Activated B cell treated with CpG ODN at 0.5 μM for 24 hours (primary cell): ENCODE measurements at regions of chr1 and their contacts with region 1.

Region 1: GRCh38 chr1:16366722-16367257 is at the start of gene SZRD1:
- DNase-seq: peak; percentile 84
- ATAC-seq: peak; percentile 83
- H3K4me3 Mint-ChIP-seq: peak within 1 kb of the TSS; percentile 99
- H3K27ac Mint-ChIP-seq: peak within 1 kb of the TSS; percentile 99
- H3K4me1 Mint-ChIP-seq: peaks cover 38% of the 10 kb centered on the region
- H3K27me3 Mint-ChIP-seq: no peaks in the 10 kb centered on the region
- CTCF ChIP-seq: no peak
- total RNA-seq, gene SZRD1: 184 and 190 TPM in 2 replicates

Region 2: DNA sequence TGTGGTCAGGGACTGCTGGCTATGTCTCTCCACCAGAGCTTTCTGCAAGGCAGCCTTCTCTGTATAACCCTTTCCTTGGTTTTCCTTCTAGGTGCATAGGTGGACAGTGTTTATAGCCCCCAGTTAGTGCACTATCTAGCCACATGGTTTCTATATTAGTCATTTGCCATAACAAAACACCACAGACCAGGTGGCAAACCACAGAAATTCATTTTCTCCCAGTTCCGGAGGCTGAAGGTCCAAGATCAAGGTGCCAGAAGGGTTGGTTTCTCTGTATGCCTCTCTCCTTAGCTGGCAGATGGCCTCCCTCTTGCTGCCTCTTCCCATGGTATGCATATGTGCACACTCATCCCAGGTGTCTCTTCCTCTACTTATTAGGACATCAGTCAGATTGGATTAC is 1661.9 kb before region 1 on chr1:
- CTCF ChIA-PET with region 1: no interaction called
- POLR2A ChIA-PET with region 1: no interaction called
- intact Hi-C with region 1: no loop called
- DNase-seq: no peak
- ATAC-seq: no peak
- H3K4me3 Mint-ChIP-seq: no peak overlapping the region
- H3K27ac Mint-ChIP-seq: no peak overlapping the region
- H3K4me1 Mint-ChIP-seq: no peaks in the 10 kb centered on the region
- H3K27me3 Mint-ChIP-seq: no peaks in the 10 kb centered on the region
- CTCF ChIP-seq: no peak

Region 3: GRCh38 chr1:15835741-15836510 is 530.9 kb before region 1 on chr1:
- CTCF ChIA-PET with region 1: no interaction called
- POLR2A ChIA-PET with region 1: interaction called, 16 read pairs
- intact Hi-C with region 1: loop called (anchors 5 kb)
- DNase-seq: peak; percentile 96
- ATAC-seq: peak; percentile 49
- H3K4me3 Mint-ChIP-seq: peak overlapping the region; percentile 90
- H3K27ac Mint-ChIP-seq: peak overlapping the region; percentile 98
- H3K4me1 Mint-ChIP-seq: peaks cover 45% of the 10 kb centered on the region
- H3K27me3 Mint-ChIP-seq: no peaks in the 10 kb centered on the region
- CTCF ChIP-seq: no peak

Region 4: GRCh38 chr1:16351994-16352841 is 14.6 kb before region 1 on chr1 and contains the start of gene FBXO42:
- CTCF ChIA-PET with region 1: interaction called, 13 read pairs
- POLR2A ChIA-PET with region 1: interaction called, 24 read pairs
- intact Hi-C with region 1: loop called (anchors 1 kb)
- DNase-seq: peak; percentile 94
- ATAC-seq: peak; percentile 91
- H3K4me3 Mint-ChIP-seq: peak within 1 kb of the TSS; percentile 88
- H3K27ac Mint-ChIP-seq: peak within 1 kb of the TSS; percentile 88
- H3K4me1 Mint-ChIP-seq: peaks cover 38% of the 10 kb centered on the region
- H3K27me3 Mint-ChIP-seq: no peaks in the 10 kb centered on the region
- CTCF ChIP-seq: no peak
- total RNA-seq, gene FBXO42: 19.0 and 20.5 TPM in 2 replicates

Region 5: DNA sequence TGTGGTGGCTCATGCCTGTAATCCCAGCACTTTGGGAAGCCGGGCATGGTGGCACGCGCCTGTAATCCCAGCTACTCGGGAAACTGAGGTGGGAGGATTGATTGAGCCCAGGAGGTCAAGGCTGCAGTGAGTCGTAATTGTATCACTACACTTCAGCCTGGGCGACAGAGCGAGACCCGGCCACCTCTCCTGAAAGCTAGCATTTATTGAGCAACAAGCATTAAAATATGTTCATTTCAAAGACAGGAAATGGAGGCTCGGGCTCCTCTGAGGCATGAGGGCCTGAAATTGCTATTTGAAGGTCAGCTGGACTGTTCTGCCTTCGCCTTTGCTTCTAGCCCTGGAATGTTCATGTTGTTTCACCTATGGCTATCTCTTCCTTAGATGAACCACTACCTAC is 36.0 kb after region 1 on chr1:
- CTCF ChIA-PET with region 1: no interaction called
- POLR2A ChIA-PET with region 1: interaction called, 3 read pairs
- intact Hi-C with region 1: loop called (anchors 5 kb)
- DNase-seq: no peak
- ATAC-seq: no peak
- H3K4me3 Mint-ChIP-seq: no peak overlapping the region
- H3K27ac Mint-ChIP-seq: no peak overlapping the region
- H3K4me1 Mint-ChIP-seq: no peaks in the 10 kb centered on the region
- H3K27me3 Mint-ChIP-seq: no peaks in the 10 kb centered on the region
- CTCF ChIP-seq: no peak

Region 6: GRCh38 chr1:16613185-16614147 is 246.7 kb after region 1 on chr1 and contains the start of gene NBPF1:
- CTCF ChIA-PET with region 1: no interaction called
- POLR2A ChIA-PET with region 1: no interaction called
- intact Hi-C with region 1: loop called (anchors 1 kb)
- DNase-seq: peak; percentile 98
- ATAC-seq: peak; percentile 97
- H3K4me3 Mint-ChIP-seq: no peak within 1 kb of the TSS
- H3K27ac Mint-ChIP-seq: no peak within 1 kb of the TSS
- H3K4me1 Mint-ChIP-seq: no peaks in the 10 kb centered on the region
- H3K27me3 Mint-ChIP-seq: no peaks in the 10 kb centered on the region
- CTCF ChIP-seq: no peak
- total RNA-seq, gene NBPF1: 20.0 and 20.2 TPM in 2 replicates

Region 7: DNA sequence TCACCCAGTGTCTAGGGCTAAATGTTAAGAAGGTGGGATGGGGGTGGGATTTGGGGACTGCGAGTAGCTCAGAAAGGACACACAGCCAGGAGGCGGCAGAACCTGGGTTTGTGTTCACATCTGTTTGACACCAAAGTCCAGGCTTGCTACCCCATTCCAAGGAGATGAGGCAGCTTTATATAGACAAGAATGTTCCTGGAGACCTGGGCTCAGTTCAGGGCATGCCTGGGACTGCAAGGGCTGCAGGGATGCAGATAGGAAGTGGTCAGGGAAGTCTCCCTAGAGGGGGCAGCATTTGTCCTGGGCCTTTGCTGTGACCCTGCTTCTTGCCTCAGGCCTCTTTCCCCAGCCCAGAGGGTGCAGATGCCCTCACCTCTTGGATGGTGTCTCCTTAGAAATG is 898.4 kb after region 1 on chr1:
- CTCF ChIA-PET with region 1: no interaction called
- POLR2A ChIA-PET with region 1: no interaction called
- intact Hi-C with region 1: no loop called
- DNase-seq: no peak
- ATAC-seq: no peak
- H3K4me3 Mint-ChIP-seq: no peak overlapping the region
- H3K27ac Mint-ChIP-seq: no peak overlapping the region
- H3K4me1 Mint-ChIP-seq: no peaks in the 10 kb centered on the region
- H3K27me3 Mint-ChIP-seq: peaks cover 4% of the 10 kb centered on the region
- CTCF ChIP-seq: no peak